CD4-positive, alpha-beta memory T cell (primary cell): ENCODE measurements at regions of chr3 and their contacts with region 1.

Region 1: DNA sequence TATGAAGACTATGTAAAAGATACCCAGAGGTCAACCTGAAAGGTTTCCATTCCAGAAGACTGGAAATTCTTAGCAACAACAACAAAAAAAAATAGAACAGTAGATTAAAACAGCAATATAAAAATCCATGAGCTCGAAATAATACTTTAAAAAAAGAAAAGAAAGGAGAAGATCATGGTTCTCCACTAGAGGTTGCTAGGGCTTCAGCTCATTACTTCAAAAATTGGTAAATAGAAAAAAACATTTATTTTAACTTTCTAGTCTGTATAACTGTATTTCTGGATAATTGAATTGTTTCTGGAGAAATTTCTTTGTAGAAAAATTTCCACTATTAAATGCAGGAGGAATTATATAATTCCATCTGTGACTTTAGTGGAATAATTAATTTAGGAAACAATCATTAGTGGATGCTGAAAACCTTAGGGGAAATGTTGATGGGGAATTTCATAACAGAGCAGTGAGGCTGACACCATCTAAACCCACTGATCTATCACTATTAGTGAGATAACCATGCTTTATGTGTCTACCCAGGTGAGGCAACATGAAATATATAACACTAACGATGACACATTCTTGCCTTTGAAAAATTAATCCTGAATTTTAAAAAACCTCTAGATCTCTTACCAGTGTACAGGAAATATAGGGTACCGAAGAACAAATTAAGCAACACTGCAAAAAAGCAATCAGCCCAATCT is 62.5 kb upstream of the SNRK start:
- DNase-seq: peak in 4 of 5 donors; percentile 14 to 30 (median 24)
- H3K4me3 ChIP-seq: no peak overlapping the region
- H3K4me3 Mint-ChIP-seq: peak overlapping the region in 2 of 8 donors; percentile 18 to 55
- H3K27ac ChIP-seq: no peak overlapping the region
- H3K27ac Mint-ChIP-seq: peak overlapping the region in 3 of 7 donors; percentile 6 to 52 (median 38)
- H3K4me1 ChIP-seq: peaks cover 43% of the 10 kb centered on the region
- H3K4me1 Mint-ChIP-seq: peaks cover 35 to 53% (median 48%) of the 10 kb centered on the region in 4 donors
- H3K27me3 ChIP-seq: no peaks in the 10 kb centered on the region
- H3K27me3 Mint-ChIP-seq: no peaks in the 10 kb centered on the region

Region 2: DNA sequence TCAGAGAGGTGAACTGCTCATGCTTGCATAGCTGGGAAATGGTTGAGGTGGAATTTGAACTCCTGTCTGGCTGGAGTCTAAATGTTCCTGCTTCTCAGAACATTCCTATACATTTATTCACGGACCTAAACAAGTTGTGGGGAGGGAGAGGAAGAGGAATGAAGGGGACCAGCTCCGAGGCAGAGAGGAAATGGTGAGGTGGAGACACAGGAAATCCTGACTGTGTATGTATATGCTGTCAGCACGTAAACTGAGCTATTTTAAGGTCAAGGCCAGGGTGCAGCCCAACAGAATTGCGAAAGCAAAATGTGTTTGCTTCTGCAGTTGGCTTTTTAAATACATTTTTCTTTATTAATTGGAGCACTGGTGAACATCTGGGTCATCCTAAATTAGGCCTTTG is 43.8 kb before region 1 on chr3:
- CTCF ChIA-PET with region 1: interaction called, 3 read pairs
- POLR2A ChIA-PET with region 1: interaction called, 4 read pairs
- intact Hi-C with region 1: loop called (anchors 5 kb)
- DNase-seq: peak; percentile 51 to 69 (median 65)
- H3K4me3 ChIP-seq: peak overlapping the region in 1 of 2 donors; percentile 20
- H3K4me3 Mint-ChIP-seq: peak overlapping the region; percentile 52 to 87 (median 78)
- H3K27ac ChIP-seq: peak overlapping the region; percentile 27
- H3K27ac Mint-ChIP-seq: peak overlapping the region; percentile 83 to 98 (median 95)
- H3K4me1 ChIP-seq: peaks cover 46% of the 10 kb centered on the region
- H3K4me1 Mint-ChIP-seq: peaks cover 40 to 72% (median 63%) of the 10 kb centered on the region in 4 donors
- H3K27me3 ChIP-seq: no peaks in the 10 kb centered on the region
- H3K27me3 Mint-ChIP-seq: no peaks in the 10 kb centered on the region

Region 3: GRCh38 chr3:43246976-43247375 is 23.2 kb after region 1 on chr3:
- CTCF ChIA-PET with region 1: interaction called, 3 read pairs
- POLR2A ChIA-PET with region 1: interaction called, 3 read pairs
- intact Hi-C with region 1: loop called (anchors 2 kb)
- DNase-seq: peak in 3 of 5 donors; percentile 19 to 30 (median 25)
- H3K4me3 ChIP-seq: no peak overlapping the region
- H3K4me3 Mint-ChIP-seq: peak overlapping the region in 6 of 8 donors; percentile 0 to 28 (median 20)
- H3K27ac ChIP-seq: no peak overlapping the region
- H3K27ac Mint-ChIP-seq: peak overlapping the region in 6 of 7 donors; percentile 1 to 76 (median 43)
- H3K4me1 ChIP-seq: peaks cover 48% of the 10 kb centered on the region
- H3K4me1 Mint-ChIP-seq: peaks cover 30 to 51% (median 41%) of the 10 kb centered on the region in 4 donors
- H3K27me3 ChIP-seq: no peaks in the 10 kb centered on the region
- H3K27me3 Mint-ChIP-seq: no peaks in the 10 kb centered on the region

Region 4: DNA sequence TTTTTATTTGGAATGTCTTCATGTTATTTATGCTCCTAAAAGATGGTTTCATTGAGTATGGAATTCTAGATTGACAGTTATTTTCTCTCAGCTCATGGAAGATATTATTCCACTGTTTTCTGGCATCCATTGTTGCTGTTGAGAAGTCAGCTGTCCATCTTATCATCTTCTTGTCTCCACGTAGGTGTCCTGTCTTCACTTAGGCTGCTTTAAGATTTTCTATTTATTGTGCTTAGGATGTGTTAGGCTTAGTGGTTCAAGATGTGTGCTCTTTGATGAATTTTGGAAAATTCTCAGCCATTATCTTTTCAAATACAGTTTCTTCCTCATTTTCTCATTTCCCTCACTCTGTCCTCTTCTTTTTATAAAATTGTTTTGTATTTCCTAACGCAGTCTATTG is 114.5 kb after region 1 on chr3:
- CTCF ChIA-PET with region 1: no interaction called
- POLR2A ChIA-PET with region 1: no interaction called
- intact Hi-C with region 1: no loop called
- DNase-seq: no peak
- H3K4me3 ChIP-seq: no peak overlapping the region
- H3K4me3 Mint-ChIP-seq: no peak overlapping the region
- H3K27ac ChIP-seq: no peak overlapping the region
- H3K27ac Mint-ChIP-seq: peak overlapping the region in 5 of 7 donors; percentile 12 to 88 (median 64)
- H3K4me1 ChIP-seq: peaks cover 19% of the 10 kb centered on the region
- H3K4me1 Mint-ChIP-seq: peaks cover 10 to 28% (median 16%) of the 10 kb centered on the region in 4 donors
- H3K27me3 ChIP-seq: no peaks in the 10 kb centered on the region
- H3K27me3 Mint-ChIP-seq: no peaks in the 10 kb centered on the region

Region 5: GRCh38 chr3:43378066-43378935 is 154.5 kb after region 1 on chr3:
- CTCF ChIA-PET with region 1: interaction called, 26 read pairs
- POLR2A ChIA-PET with region 1: interaction called, 8 read pairs
- intact Hi-C with region 1: loop called (anchors 1 kb)
- DNase-seq: peak; percentile 71 to 76 (median 73)
- H3K4me3 ChIP-seq: no peak overlapping the region
- H3K4me3 Mint-ChIP-seq: peak overlapping the region in 2 of 8 donors; percentile 11 to 14
- H3K27ac ChIP-seq: no peak overlapping the region
- H3K27ac Mint-ChIP-seq: peak overlapping the region in 6 of 7 donors; percentile 38 to 84 (median 69)
- H3K4me1 ChIP-seq: peaks cover 9% of the 10 kb centered on the region
- H3K4me1 Mint-ChIP-seq: peaks cover 9 to 26% (median 17%) of the 10 kb centered on the region in 4 donors
- H3K27me3 ChIP-seq: no peaks in the 10 kb centered on the region
- H3K27me3 Mint-ChIP-seq: no peaks in the 10 kb centered on the region

Region 6: DNA sequence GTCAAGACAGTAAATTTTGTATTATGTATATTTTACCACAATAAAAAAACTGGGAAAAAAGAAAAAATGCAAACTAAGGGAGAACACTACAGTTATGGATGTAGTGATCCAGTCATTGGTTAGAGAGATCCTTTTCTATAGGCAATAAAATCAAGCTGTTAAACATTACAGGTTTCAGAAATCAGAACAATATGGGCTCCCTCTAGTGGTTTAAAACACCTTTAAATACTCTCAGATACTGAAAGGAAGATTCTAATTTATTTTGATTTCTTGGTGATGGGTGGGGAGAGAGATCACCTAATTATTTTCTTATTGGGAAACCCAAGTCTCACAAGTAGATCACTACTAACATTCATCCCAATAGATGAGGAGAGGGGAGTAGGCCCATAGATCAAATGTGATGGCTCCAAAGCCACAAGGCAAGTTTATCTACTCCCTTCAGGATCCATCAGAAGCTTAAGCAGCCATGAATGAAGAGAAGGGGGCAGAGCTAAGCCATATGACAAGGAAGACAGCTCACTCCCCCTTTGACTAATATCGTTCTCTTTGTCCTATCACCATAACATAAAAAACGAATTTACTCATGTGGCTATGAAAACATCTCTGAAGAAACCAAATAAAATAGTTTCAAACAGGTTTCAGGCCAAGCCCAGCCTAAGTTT is 279.4 kb after region 1 on chr3:
- CTCF ChIA-PET with region 1: interaction called, 28 read pairs
- POLR2A ChIA-PET with region 1: interaction called, 4 read pairs
- intact Hi-C with region 1: loop called (anchors 1 kb)
- DNase-seq: peak in 4 of 5 donors; percentile 54 to 61 (median 60)
- H3K4me3 ChIP-seq: no peak overlapping the region
- H3K4me3 Mint-ChIP-seq: no peak overlapping the region
- H3K27ac ChIP-seq: no peak overlapping the region
- H3K27ac Mint-ChIP-seq: peak overlapping the region in 5 of 7 donors; percentile 24 to 88 (median 63)
- H3K4me1 ChIP-seq: peaks cover 39% of the 10 kb centered on the region
- H3K4me1 Mint-ChIP-seq: peaks cover 32 to 52% (median 41%) of the 10 kb centered on the region in 4 donors
- H3K27me3 ChIP-seq: no peaks in the 10 kb centered on the region
- H3K27me3 Mint-ChIP-seq: no peaks in the 10 kb centered on the region

Region 7: DNA sequence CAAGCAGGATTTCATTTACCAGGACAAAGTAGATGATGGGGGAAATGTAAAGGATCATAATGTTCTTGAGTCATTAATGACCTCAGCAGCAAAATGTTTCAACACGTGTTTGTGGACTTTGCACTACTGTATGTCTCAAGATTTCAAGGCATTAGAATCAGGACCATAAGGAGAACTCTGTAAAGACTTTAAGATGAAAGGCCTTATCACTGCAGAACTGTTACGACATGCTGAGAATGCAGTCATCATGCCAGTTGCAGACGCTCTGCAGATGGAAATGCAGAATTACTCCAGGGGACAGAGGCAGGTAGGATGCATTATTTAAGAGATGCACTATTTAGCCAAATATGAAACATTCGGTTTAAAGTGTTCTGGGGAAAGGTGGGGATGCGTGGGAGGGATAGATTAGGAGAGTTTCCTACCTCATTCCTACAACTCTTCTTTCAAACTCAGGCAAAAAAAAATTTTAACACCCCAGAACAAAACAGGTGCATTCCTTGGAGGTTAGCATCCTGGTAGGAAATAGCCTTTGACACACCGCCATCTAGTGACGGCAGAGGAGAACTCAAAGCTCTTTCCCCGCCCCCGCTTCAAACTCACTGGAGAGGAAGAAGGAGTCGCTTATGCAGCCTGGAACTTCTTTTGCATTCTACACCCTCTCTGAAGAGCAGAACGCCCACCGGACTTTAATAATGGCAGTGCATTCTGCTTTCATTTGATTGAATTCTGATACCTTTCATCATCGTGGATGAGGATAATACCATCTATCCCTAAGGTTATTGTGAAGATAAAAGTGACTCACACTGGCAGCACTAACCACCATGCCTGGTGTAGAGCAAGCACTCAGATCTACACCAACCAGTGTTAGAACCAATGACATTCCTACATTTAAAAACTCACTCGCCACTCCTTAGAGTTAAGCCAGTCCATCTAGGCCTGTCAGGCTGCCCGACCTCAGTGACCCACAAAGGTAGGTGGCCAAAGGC is 974.8 kb after region 1 on chr3:
- CTCF ChIA-PET with region 1: no interaction called
- POLR2A ChIA-PET with region 1: no interaction called
- intact Hi-C with region 1: loop called (anchors 5 kb)
- DNase-seq: peak; percentile 52 to 62 (median 56)
- H3K4me3 ChIP-seq: no peak overlapping the region
- H3K4me3 Mint-ChIP-seq: no peak overlapping the region
- H3K27ac ChIP-seq: no peak overlapping the region
- H3K27ac Mint-ChIP-seq: no peak overlapping the region
- H3K4me1 ChIP-seq: no peaks in the 10 kb centered on the region
- H3K4me1 Mint-ChIP-seq: peaks cover 0 to 6% (median under 1%) of the 10 kb centered on the region in 4 donors
- H3K27me3 ChIP-seq: no peaks in the 10 kb centered on the region
- H3K27me3 Mint-ChIP-seq: peaks cover 5 to 18% of the 10 kb centered on the region in 2 donors